A549 (cell line): ENCODE measurements at regions of chr1 and their contacts with region 1.

Region 1: DNA sequence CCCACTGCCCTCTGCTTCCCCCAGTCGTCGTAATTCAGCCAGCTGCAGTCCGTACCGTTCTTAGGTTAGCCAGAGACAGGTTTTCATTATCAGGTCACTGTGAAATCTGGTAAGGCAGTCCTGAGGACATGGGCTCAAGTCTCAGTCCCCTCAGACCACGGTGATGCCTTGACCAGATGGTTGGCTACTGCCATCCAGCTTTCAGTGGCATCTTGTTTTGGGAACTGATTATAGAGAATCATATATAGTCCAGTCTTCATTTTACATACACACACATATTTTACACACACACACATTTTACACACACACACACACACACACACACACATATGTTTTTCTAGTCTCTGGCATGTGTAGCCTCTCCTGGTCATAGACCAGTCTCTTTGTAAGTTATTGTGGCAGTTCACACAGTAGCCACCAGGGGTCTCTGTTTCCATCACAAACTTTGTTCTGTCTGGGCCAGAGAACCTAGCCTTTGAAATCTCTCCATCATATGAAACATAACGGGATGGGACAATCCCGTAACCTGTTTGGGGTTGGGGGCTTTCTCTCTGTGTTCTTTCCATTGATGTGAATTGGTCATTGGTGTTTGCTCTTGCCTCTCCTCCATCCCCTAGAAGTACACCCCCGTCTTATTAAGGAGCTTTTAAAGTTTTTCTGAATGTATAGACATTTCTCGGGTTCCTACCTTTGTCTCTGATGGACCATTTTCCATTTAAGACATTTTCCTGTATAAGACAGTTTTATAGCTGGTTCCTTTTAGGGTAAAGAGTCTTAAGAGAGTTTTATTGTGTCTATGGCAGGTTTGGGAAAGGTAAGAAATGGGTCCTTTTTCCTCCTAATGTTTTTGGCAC is 8.4 kb upstream of the IKBKE start:
- DNase-seq: peak; percentile 66 to 77
- ATAC-seq: peak; percentile 72 to 91
- H3K4me3 ChIP-seq: no peak overlapping the region
- H3K27ac ChIP-seq: no peak overlapping the region
- H3K4me1 ChIP-seq: peaks cover 12% of the 10 kb centered on the region; the same call in 2 of the 3 replicates
- CTCF ChIP-seq: peak; percentile 78
- EP300 ChIP-seq: no peak
- POLR2A ChIP-seq: no peak
- RAD21 ChIP-seq: peak; percentile 45 to 58

Region 2: GRCh38 chr1:206445116-206445515 is 16.7 kb before region 1 on chr1:
- CTCF ChIA-PET with region 1: interaction called, 29 read pairs
- POLR2A ChIA-PET with region 1: no interaction called
- DNase-seq: no peak
- ATAC-seq: no peak
- H3K4me3 ChIP-seq: no peak overlapping the region
- H3K27ac ChIP-seq: no peak overlapping the region
- H3K4me1 ChIP-seq: no peaks in the 10 kb centered on the region
- CTCF ChIP-seq: no peak
- EP300 ChIP-seq: no peak
- POLR2A ChIP-seq: no peak
- RAD21 ChIP-seq: no peak

Region 3: DNA sequence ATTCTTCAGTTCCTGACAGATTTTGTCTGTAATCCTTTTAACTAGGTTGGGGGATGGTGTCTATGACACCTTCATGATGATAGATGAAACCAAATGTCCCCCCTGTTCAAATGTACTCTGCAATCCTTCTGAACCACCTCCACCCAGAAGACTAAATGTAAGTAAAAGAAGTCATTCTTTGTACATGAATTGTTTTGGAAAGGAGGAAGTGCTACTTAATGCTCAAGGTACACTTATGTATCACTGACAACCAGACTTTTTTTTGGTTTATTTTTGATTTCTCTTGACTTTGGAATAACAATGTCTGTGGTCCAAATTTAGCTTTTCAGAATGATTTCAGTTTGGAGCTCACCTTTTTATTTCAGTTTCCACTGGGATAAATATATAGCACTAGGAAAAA is 175.8 kb after region 1 on chr1:
- CTCF ChIA-PET with region 1: no interaction called
- POLR2A ChIA-PET with region 1: no interaction called
- DNase-seq: no peak
- ATAC-seq: no peak
- H3K4me3 ChIP-seq: no peak overlapping the region
- H3K27ac ChIP-seq: no peak overlapping the region
- H3K4me1 ChIP-seq: peaks cover 32% of the 10 kb centered on the region; the same call in 2 of the 3 replicates
- CTCF ChIP-seq: no peak
- EP300 ChIP-seq: no peak
- POLR2A ChIP-seq: no peak
- RAD21 ChIP-seq: no peak